Dendritic cell treated with granulocyte-macrophage colony-stimulating factor and Interleukin-4, amounts not matched to agents 40 ng/mL and 50 ng/mL, for 4 days (primary cell): ENCODE measurements at regions of chr17 and their contacts with region 1.

Region 1: DNA sequence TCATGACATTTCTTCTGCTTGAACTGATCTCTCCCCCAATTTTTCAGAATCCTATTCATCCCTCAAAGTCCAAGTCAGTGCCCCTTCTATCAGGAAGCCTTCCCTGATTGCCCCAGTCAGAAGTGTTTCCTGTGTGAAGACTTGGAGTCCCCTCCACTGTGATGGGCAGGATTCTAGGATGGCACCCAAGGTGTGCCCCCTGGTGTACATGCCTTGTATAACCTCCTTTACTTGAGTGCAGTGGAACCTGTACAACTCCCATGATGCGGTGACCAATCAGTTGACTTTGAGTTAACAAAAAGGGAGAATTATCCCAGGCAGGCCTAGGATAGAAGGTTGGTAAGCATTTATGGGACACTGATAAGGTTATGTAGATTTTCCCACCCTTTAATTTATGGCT is 23.4 kb downstream of the MYH13 start:
- H3K4me3 Mint-ChIP-seq: no peak overlapping the region
- H3K27ac Mint-ChIP-seq: no peak overlapping the region
- H3K4me1 Mint-ChIP-seq: no peaks in the 10 kb centered on the region
- H3K27me3 Mint-ChIP-seq: peaks cover 2% of the 10 kb centered on the region

Region 2: GRCh38 chr17:10295728-10296343 is 53.6 kb before region 1 on chr17:
- intact Hi-C with region 1: loop called (anchors 2 kb)
- H3K4me3 Mint-ChIP-seq: no peak overlapping the region
- H3K27ac Mint-ChIP-seq: no peak overlapping the region
- H3K4me1 Mint-ChIP-seq: peaks cover 12% of the 10 kb centered on the region
- H3K27me3 Mint-ChIP-seq: peaks cover 13% of the 10 kb centered on the region